Esophagus squamous epithelium (tissue), 5 donors: ENCODE measurements at regions of chr12 and their contacts with region 1.

Region 1: GRCh38 chr12:53746592-53747092 is 5.1 kb downstream of the CISTR start:
- DNase-seq: peak; percentile 46
- H3K4me3 ChIP-seq: no peak overlapping the region
- H3K27ac ChIP-seq: no peak overlapping the region
- H3K4me1 ChIP-seq: peaks cover 9 to 25% (median 13%) of the 10 kb centered on the region in 3 donors
- H3K27me3 ChIP-seq: peaks cover 0 to 93% (median 7%) of the 10 kb centered on the region in 4 donors
- CTCF ChIP-seq: peak; percentile 99 to 100 (median 100)
- POLR2A ChIP-seq: no peak

Region 2: GRCh38 chr12:53686436-53686835 is 60.2 kb before region 1 on chr12:
- intact Hi-C with region 1: no loop called
- DNase-seq: no peak
- H3K4me3 ChIP-seq: no peak overlapping the region
- H3K27ac ChIP-seq: no peak overlapping the region
- H3K4me1 ChIP-seq: no peaks in the 10 kb centered on the region
- H3K27me3 ChIP-seq: peaks cover 0 to 9% (median 0%) of the 10 kb centered on the region in 4 donors
- CTCF ChIP-seq: no peak
- POLR2A ChIP-seq: no peak

Region 3: DNA sequence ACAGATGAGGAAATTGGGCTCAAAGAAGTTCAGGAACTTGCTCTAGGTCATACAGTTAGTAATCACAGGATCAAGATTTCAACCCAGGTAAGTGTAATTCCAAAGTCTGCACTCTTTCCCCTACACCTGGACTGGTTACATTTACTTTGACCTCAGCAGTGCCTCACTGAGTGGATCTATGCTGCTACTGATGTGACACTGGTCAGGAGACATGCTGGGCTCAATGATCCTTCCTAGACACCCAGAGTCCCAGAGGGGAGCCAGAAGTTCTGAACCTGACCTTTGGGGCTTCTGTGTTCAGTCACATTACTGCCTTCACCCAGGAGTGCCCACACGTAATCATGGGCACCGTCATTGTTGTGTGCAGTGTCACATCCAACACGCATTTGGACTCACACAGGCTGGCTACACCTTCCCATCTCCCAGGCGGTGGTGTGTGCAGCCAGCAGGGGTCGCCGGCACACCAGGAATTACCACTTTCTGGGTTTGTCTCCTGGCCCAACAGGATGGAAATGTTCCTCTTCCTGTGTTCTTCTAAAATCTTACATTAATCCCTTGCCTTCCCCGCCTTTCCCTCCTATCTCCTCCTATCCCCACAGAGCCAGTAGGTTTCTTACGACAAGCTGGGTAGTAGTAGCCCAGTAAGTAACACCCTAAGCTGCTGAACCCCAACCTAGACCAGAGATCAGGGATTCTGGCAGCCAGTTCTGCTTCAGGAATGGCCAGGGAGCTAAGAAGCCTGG is 45.0 kb before region 1 on chr12:
- intact Hi-C with region 1: loop called (anchors 5 kb)
- DNase-seq: no peak
- H3K4me3 ChIP-seq: no peak overlapping the region
- H3K27ac ChIP-seq: no peak overlapping the region
- H3K4me1 ChIP-seq: peaks cover 0 to 8% (median 8%) of the 10 kb centered on the region in 3 donors
- H3K27me3 ChIP-seq: peaks cover 0 to 100% (median 10%) of the 10 kb centered on the region in 4 donors
- CTCF ChIP-seq: peak; percentile 73 to 93 (median 88)
- POLR2A ChIP-seq: no peak